ENCODE measurements at regions of chr11 and their contacts with region 1.

Region 1: DNA sequence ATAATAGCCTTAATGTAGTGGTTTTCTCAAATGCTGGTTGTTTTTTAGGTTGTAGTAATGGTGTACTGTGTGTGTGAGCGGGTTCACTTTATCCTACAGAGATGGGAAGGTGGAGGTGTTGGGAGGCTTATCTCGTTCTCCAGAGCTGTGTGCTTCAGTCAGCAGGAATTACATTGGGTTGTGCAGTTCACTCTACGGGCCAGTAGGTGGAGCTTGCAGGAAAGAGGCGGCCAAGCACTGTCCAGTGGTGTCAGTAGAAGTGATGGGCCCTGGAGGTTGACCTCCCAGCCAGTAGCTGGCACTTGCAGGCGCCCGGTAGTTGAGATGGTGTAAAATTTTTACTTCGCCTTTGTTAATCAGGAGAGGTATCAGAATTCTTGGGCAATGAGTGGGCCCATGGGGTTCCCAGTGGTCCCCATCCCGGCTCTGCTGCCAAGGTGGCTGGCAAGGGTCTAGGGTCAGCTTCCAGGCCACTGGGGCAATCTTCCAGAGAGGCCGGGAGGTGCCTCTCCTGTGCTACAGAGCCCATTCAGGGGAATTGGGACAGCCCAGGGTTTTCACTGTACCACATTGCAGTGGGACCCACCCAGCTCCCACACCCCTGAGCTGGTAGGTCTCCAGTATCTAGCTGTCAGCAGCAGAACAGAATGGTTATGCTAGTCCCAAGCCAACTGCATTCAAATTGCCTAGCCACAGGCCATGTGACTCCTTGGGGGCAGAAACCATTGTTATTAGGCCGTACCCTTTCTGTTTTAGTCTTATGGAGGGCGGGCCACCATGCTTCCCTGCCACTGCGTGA is 43.9 kb downstream of the BIRC2 start:
- DNase-seq: peak; percentile 64
- H3K4me3 Mint-ChIP-seq: no peak overlapping the region
- H3K27ac Mint-ChIP-seq: no peak overlapping the region
- H3K4me1 Mint-ChIP-seq: peaks cover 23% of the 10 kb centered on the region
- H3K27me3 Mint-ChIP-seq: no peaks in the 10 kb centered on the region

Region 2: GRCh38 chr11:102401905-102402304 is 11.0 kb after region 1 on chr11:
- CTCF ChIA-PET with region 1: interaction called, 32 read pairs
- DNase-seq: no peak
- H3K4me3 Mint-ChIP-seq: no peak overlapping the region
- H3K27ac Mint-ChIP-seq: peak overlapping the region; percentile 20
- H3K4me1 Mint-ChIP-seq: peaks cover 47% of the 10 kb centered on the region
- H3K27me3 Mint-ChIP-seq: no peaks in the 10 kb centered on the region

Region 3: DNA sequence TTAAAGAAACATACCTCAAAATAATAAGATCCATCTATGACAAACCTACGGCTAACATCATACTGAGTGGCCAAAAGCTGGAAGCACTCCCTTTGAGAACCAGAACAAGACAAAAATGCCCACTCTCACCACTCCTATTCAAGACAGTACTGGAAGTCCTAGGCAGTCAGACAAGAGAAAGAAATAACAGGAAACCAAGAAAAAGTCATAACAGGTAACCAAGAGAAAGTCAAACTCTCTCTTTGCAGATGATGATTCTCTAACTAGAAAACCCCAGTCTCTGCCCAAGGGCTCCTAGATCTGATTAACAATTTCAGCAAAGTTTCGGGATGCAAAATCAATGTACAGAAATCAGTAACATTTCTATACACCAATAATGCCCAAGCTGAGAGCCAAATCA is 26.1 kb after region 1 on chr11:
- CTCF ChIA-PET with region 1: interaction called, 10 read pairs
- DNase-seq: no peak
- H3K4me3 Mint-ChIP-seq: peak overlapping the region; percentile 25
- H3K27ac Mint-ChIP-seq: peak overlapping the region; percentile 88
- H3K4me1 Mint-ChIP-seq: peaks cover 92% of the 10 kb centered on the region
- H3K27me3 Mint-ChIP-seq: no peaks in the 10 kb centered on the region

Region 4: DNA sequence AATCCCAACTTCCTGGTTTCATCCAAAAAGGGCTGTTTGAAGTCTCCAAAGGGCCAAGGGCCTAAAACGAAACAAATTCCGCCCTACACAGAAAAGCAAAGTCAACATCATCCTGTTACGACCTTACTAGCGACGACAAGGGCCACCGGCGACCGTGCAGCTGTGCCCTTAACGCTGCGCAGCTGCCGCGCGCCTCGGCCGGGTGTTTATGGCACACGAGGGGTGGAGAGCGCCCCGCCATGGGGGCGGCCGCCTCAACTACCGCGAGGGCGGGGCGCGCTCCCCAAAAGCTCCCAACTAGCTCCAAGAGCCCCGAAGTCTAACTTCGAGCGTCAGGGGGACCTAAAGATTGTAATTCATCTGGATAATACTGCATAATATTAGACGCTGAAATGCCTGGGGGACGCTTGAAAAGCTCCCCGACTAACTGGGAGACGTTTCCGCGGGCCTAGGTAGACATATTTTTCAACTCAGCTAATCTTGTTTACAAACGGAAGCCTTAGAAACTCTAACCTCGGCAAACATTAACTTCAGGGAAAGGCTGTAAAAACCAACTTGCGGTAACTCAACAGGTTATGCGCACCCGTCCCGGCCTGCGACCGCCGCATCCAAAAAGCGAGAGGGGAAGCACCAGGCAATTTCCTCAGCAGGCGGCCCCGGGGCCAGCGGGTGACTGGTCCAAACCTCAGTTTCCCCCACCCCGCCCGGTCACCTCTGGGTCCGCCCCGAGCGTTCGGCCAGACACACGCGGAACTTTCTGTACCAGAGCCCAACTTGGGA is 61.0 kb after region 1 on chr11:
- CTCF ChIA-PET with region 1: interaction called, 37 read pairs
- DNase-seq: peak; percentile 88
- H3K4me3 Mint-ChIP-seq: peak overlapping the region; percentile 95
- H3K27ac Mint-ChIP-seq: peak overlapping the region; percentile 98
- H3K4me1 Mint-ChIP-seq: peaks cover 70% of the 10 kb centered on the region
- H3K27me3 Mint-ChIP-seq: peaks cover 3% of the 10 kb centered on the region

Region 5: GRCh38 chr11:102488208-102488607 is 97.3 kb after region 1 on chr11:
- CTCF ChIA-PET with region 1: interaction called, 16 read pairs
- DNase-seq: no peak
- H3K4me3 Mint-ChIP-seq: no peak overlapping the region
- H3K27ac Mint-ChIP-seq: no peak overlapping the region
- H3K4me1 Mint-ChIP-seq: peaks cover 23% of the 10 kb centered on the region
- H3K27me3 Mint-ChIP-seq: peaks cover 3% of the 10 kb centered on the region

Region 6: DNA sequence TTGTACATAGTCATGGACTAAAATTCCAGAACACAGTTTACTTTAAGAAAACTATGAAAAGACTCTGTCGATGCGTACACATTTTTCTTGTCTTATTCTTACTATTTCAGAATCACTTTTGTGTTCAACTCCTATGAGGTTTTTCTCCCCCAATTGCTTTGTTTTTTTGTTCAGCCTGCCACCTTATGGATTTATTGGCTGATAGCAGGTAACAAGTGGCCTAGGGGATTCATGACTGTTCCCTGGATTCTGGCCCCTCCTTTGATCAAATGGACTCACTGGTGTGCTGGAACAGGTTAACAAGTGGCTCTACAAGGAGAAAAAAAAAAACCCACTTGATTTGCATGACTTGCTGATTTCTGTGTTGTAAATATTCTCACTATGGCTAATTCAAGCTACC is 223.6 kb after region 1 on chr11:
- CTCF ChIA-PET with region 1: interaction called, 36 read pairs
- DNase-seq: no peak
- H3K4me3 Mint-ChIP-seq: no peak overlapping the region
- H3K27ac Mint-ChIP-seq: no peak overlapping the region
- H3K4me1 Mint-ChIP-seq: peaks cover 8% of the 10 kb centered on the region
- H3K27me3 Mint-ChIP-seq: peaks cover 17% of the 10 kb centered on the region

Measured in activated naive CD4-positive, alpha-beta T cell treated with anti-CD3 and anti-CD28 coated beads, Interleukin-2, amount 10 ng/mL, durations not matched to agents 7 days and 5 days (primary cell).